Endothelial cell of umbilical vein (primary cell): ENCODE measurements at regions of chr3 and their contacts with region 1.

Region 1: GRCh38 chr3:8441969-8442559 is 59.6 kb upstream of the LMCD1 start:
- DNase-seq: peak; percentile 76
- H3K4me3 ChIP-seq: no peak overlapping the region
- H3K27ac ChIP-seq: no peak overlapping the region
- H3K4me1 ChIP-seq: peaks cover 30% of the 10 kb centered on the region
- H3K27me3 ChIP-seq: no peaks in the 10 kb centered on the region
- CTCF ChIP-seq: peak; percentile 62 to 75
- POLR2A ChIP-seq: no peak

Region 2: DNA sequence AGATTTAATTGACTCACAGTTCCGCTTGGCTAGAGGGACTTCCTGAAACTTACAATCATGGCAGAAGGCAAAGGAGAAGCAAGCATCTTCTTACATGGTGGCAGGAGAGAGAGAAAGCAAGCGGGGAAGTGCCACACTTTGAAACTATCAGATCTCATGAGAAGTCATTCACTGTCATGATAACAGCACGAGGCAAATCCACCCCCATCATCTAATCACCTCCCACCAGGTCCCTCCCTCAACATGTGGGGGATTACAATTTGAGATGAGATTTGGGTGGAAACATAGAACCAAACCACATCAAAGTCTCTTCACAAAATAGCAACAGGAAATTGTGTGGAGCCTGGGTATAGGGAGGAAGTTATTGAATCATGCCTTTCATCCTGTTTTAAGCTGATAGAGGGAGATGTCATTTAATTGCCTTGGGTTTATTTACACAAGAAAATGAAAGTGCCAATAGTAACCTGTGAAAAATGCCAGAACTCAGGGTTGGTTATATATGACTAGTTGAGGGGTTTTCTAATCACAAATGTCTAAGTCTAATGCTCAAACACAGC is 565.2 kb before region 1 on chr3:
- CTCF ChIA-PET with region 1: no interaction called
- POLR2A ChIA-PET with region 1: no interaction called
- dilution Hi-C with region 1: no loop called
- intact Hi-C with region 1: loop called (anchors 2 kb)
- DNase-seq: peak; percentile 92
- H3K4me3 ChIP-seq: peak overlapping the region in 1 of 3 experiments; percentile 1
- H3K27ac ChIP-seq: peak overlapping the region; percentile 76
- H3K4me1 ChIP-seq: peaks cover 40% of the 10 kb centered on the region
- H3K27me3 ChIP-seq: no peaks in the 10 kb centered on the region
- CTCF ChIP-seq: no peak
- POLR2A ChIP-seq: peak; percentile 41

Region 3: DNA sequence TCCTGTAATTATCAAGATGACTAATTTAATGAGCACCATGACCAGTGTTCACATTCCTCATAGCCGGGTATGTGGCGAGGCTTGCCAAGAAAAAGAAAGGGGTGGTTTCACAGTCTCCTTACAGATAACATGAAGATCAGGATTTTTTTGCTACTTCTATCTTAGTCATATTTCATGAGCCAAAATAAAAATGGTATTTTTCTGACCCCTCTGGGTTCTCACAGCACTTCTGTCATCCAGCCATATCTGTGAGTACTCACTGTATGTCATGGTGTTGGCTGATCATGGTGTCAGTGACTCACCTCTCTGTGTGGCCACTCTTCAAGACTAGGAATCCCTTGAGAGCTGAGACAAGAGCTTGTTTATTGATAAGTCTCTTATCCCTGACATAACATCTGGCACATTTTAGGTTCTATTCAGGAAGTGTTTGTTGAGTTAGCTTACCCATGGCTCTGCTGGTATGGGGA is 70.9 kb before region 1 on chr3:
- CTCF ChIA-PET with region 1: no interaction called
- POLR2A ChIA-PET with region 1: no interaction called
- dilution Hi-C with region 1: no loop called
- intact Hi-C with region 1: no loop called
- DNase-seq: no peak
- H3K4me3 ChIP-seq: no peak overlapping the region
- H3K27ac ChIP-seq: no peak overlapping the region
- H3K4me1 ChIP-seq: no peaks in the 10 kb centered on the region
- H3K27me3 ChIP-seq: no peaks in the 10 kb centered on the region
- CTCF ChIP-seq: no peak
- POLR2A ChIP-seq: no peak

Region 4: GRCh38 chr3:8482960-8483665 is 41.0 kb after region 1 on chr3:
- CTCF ChIA-PET with region 1: interaction called, 13 read pairs
- POLR2A ChIA-PET with region 1: no interaction called
- dilution Hi-C with region 1: no loop called
- intact Hi-C with region 1: loop called (anchors 1 kb)
- DNase-seq: peak; percentile 96
- H3K4me3 ChIP-seq: no peak overlapping the region
- H3K27ac ChIP-seq: peak overlapping the region; percentile 66
- H3K4me1 ChIP-seq: peaks cover 16% of the 10 kb centered on the region
- H3K27me3 ChIP-seq: no peaks in the 10 kb centered on the region
- CTCF ChIP-seq: no peak
- POLR2A ChIP-seq: no peak

Region 5: GRCh38 chr3:8560366-8561007 is 118.4 kb after region 1 on chr3:
- CTCF ChIA-PET with region 1: interaction called, 13 read pairs
- POLR2A ChIA-PET with region 1: no interaction called
- dilution Hi-C with region 1: no loop called
- intact Hi-C with region 1: loop called (anchors 5 kb)
- DNase-seq: no peak
- H3K4me3 ChIP-seq: no peak overlapping the region
- H3K27ac ChIP-seq: no peak overlapping the region
- H3K4me1 ChIP-seq: peaks cover 12% of the 10 kb centered on the region
- H3K27me3 ChIP-seq: no peaks in the 10 kb centered on the region
- CTCF ChIP-seq: no peak
- POLR2A ChIP-seq: no peak

Region 6: DNA sequence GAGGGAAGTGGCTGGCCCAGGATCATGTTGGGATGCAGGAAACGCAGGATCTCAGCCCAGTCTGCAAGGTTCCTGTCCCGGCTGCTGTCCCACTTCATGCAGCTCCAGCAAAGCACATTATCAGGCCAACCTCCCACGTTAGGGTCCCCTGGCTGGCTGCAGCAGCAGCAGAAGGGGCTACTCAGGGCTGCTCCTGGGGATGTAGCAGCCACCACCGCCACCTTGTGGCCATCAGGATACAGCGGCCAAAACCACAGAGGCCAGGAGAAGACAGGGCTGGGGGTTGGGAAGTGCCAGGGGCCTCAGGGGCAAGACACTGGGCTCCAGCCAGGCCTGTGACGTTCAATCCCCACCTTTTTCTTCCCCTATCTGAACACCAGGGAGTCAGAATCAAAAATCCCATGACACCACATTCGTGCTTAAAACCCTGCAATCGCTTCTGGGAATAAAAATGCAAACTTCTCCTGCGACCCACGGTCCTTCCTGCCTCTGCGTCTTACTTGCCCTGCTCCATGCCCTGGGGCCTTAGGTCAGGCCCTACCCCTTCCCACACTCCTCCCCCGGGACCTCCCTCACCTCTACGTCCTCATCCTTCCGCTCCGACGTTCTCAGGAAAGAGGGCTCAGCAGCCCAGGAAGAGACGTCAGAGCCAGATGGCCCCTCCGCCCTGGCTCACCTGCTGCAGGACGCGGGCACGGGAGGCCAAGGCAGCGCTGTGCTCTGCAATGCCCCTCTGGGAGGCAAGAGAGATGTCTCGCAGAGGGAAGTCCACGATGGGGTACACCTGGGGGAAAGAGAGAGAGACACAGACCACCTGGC is 181.0 kb after region 1 on chr3:
- CTCF ChIA-PET with region 1: interaction called, 74 read pairs
- POLR2A ChIA-PET with region 1: no interaction called
- dilution Hi-C with region 1: no loop called
- intact Hi-C with region 1: loop called (anchors 1 kb)
- DNase-seq: peak; percentile 63
- H3K4me3 ChIP-seq: no peak overlapping the region
- H3K27ac ChIP-seq: no peak overlapping the region
- H3K4me1 ChIP-seq: peaks cover 4% of the 10 kb centered on the region
- H3K27me3 ChIP-seq: no peaks in the 10 kb centered on the region
- CTCF ChIP-seq: peak; percentile 75 to 96
- POLR2A ChIP-seq: no peak